Right lobe of liver (tissue), 6 donors: ENCODE measurements at regions of chr19 and their contacts with region 1.

Region 1: GRCh38 chr19:7197760-7198696 is 96.2 kb downstream of the INSR start:
- DNase-seq: peak; percentile 93 to 95 (median 93)
- ATAC-seq: peak; percentile 73 to 90 (median 86)
- H3K4me3 ChIP-seq: peak overlapping the region; percentile 47 to 83 (median 71)
- H3K27ac ChIP-seq: peak overlapping the region; percentile 68 to 96 (median 95)
- H3K4me1 ChIP-seq: peaks cover 6 to 36% (median 21%) of the 10 kb centered on the region in 4 donors
- H3K27me3 ChIP-seq: no peaks in the 10 kb centered on the region
- CTCF ChIP-seq: peak in 2 of 4 donors; percentile 25 to 35
- POLR2A ChIP-seq: peak; percentile 94

Region 2: GRCh38 chr19:7293795-7294570 is 96.0 kb after region 1 on chr19 and contains the start of gene INSR:
- intact Hi-C with region 1: loop called in 1 of 2 experiments (anchors 10 kb)
- DNase-seq: peak; percentile 88 to 94 (median 94)
- ATAC-seq: peak; percentile 76 to 94 (median 90)
- H3K4me3 ChIP-seq: peak within 1 kb of the TSS; percentile 82 to 96 (median 90)
- H3K27ac ChIP-seq: peak within 1 kb of the TSS; percentile 99
- H3K4me1 ChIP-seq: peaks cover 0 to 21% (median 6%) of the 10 kb centered on the region in 4 donors
- H3K27me3 ChIP-seq: no peaks in the 10 kb centered on the region
- CTCF ChIP-seq: no peak
- POLR2A ChIP-seq: peak; percentile 73
- total RNA-seq, gene INSR: 82.7 to 121 (median 106) TPM

Region 3: DNA sequence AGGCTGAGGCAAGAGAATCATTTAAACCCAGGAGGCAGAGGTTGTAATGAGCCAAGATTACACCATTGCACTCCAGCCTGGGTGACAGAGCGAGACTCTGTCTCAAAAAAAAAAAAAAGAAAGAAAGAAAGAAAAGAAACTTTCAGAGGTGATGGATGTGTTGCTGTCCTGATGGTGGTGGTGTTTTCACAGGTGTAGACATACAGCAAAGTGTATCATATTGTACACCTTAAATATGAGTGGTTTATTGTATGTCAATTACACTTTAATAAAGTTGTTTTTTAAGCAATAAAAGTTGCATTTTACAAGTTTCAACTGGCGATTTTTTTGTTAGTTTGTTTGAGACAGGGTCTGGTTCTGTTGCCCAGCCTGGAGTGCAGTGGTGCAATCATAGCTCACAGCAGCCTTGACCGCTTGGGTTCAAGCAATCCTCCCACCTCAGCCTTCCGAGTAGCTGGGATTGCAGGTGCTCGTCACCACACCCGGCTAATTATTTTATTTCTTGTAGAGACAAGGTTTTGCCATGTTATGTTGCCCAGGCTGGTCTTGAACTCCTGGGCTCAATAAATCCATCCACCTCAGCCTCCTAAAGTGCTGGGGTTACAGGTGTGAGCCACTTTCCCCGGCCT is 109.7 kb after region 1 on chr19:
- intact Hi-C with region 1: no loop called
- DNase-seq: no peak
- ATAC-seq: no peak
- H3K4me3 ChIP-seq: no peak overlapping the region
- H3K27ac ChIP-seq: no peak overlapping the region
- H3K4me1 ChIP-seq: no peaks in the 10 kb centered on the region
- H3K27me3 ChIP-seq: no peaks in the 10 kb centered on the region
- CTCF ChIP-seq: no peak
- POLR2A ChIP-seq: no peak

Region 4: DNA sequence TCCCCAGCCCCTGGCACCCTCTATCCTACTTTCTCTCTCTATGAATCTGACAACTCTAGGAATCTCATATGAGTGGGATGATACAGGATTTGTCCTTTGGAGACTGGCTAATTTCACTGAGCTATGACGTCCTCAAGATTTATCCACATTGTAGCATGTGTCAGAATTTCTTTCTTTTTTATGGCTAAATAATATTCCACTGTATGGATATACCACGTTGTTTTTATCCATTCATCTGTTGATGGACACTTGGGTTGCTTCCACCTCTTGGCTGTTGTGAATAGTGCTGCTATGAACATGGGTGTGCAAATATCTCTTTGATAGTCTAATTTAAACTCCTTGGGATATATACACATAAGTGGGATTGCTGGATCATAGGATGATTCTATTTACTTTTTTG is 120.1 kb after region 1 on chr19:
- intact Hi-C with region 1: no loop called
- DNase-seq: no peak
- ATAC-seq: no peak
- H3K4me3 ChIP-seq: no peak overlapping the region
- H3K27ac ChIP-seq: no peak overlapping the region
- H3K4me1 ChIP-seq: peaks cover 0 to 11% (median 7%) of the 10 kb centered on the region in 4 donors
- H3K27me3 ChIP-seq: no peaks in the 10 kb centered on the region
- CTCF ChIP-seq: no peak
- POLR2A ChIP-seq: no peak